B cell (primary cell): ENCODE measurements at regions of chr19 and their contacts with region 1.

Region 1: GRCh38 chr19:18521885-18522624 is at the start of gene ELL:
- DNase-seq: peak; percentile 100
- ATAC-seq: peak; percentile 87
- H3K4me3 ChIP-seq: peak within 1 kb of the TSS; percentile 74 to 97 (median 89)
- H3K4me3 Mint-ChIP-seq: peak within 1 kb of the TSS; percentile 90
- H3K27ac ChIP-seq: peak within 1 kb of the TSS; percentile 95 to 98
- H3K27ac Mint-ChIP-seq: peak within 1 kb of the TSS; percentile 95
- H3K4me1 ChIP-seq: peaks cover 7 to 23% of the 10 kb centered on the region in 2 donors
- H3K4me1 Mint-ChIP-seq: peaks cover 18% of the 10 kb centered on the region
- H3K27me3 ChIP-seq: no peaks in the 10 kb centered on the region
- H3K27me3 Mint-ChIP-seq: no peaks in the 10 kb centered on the region
- CTCF ChIP-seq: no peak
- total RNA-seq, gene ELL: 31.4 and 34.0 TPM in 2 replicates

Region 2: GRCh38 chr19:18469069-18469846 is 52.8 kb before region 1 on chr19:
- CTCF ChIA-PET with region 1: interaction called, 20 read pairs
- POLR2A ChIA-PET with region 1: no interaction called
- intact Hi-C with region 1: no loop called
- DNase-seq: peak; percentile 70
- ATAC-seq: no peak
- H3K4me3 ChIP-seq: no peak overlapping the region
- H3K4me3 Mint-ChIP-seq: no peak overlapping the region
- H3K27ac ChIP-seq: no peak overlapping the region
- H3K27ac Mint-ChIP-seq: no peak overlapping the region
- H3K4me1 ChIP-seq: no peaks in the 10 kb centered on the region
- H3K4me1 Mint-ChIP-seq: peaks cover 10% of the 10 kb centered on the region
- H3K27me3 ChIP-seq: no peaks in the 10 kb centered on the region
- H3K27me3 Mint-ChIP-seq: no peaks in the 10 kb centered on the region
- CTCF ChIP-seq: peak; percentile 71

Region 3: DNA sequence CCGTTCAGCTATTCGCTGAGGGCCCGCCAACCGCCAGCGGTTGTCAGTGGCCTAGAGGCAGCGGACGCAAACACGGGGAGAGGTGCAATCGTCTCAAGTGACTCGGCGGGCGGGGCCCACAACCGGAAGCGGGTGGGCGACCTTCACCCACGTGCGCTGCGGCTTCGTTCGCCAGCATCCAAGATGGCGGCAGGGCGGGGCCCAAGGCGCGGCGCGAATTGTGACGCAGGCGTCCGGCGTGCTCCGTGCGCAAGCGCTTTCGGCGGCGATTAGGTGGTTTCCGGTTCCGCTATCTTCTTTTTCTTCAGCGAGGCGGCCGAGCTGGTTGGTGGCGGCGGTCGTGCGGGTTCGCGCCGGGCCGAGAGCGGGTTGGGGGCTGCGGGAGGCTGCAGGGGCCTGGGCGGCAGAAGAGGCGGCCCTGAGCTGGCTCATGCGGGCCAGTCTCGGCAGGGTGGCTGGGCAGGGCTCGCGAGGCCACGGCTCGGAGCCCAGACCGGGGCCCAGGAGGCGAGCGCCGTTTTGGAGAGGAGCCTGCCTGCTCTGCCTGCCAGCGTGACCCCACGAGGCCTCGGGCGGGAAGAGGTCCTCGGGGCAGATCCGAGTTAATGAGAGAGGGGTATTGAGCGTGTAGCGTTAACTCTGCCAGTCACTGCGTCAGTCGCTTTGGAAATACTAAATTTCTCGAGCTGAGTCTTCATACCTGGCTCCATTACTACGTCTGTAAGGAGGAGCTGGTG is 49.7 kb after region 1 on chr19 and contains the start of gene UBA52:
- CTCF ChIA-PET with region 1: interaction called, 26 read pairs
- POLR2A ChIA-PET with region 1: interaction called, 9 read pairs
- intact Hi-C with region 1: loop called (anchors 1 kb)
- DNase-seq: peak; percentile 99
- ATAC-seq: peak; percentile 93
- H3K4me3 ChIP-seq: peak within 1 kb of the TSS; percentile 69 to 94 (median 86)
- H3K4me3 Mint-ChIP-seq: peak within 1 kb of the TSS; percentile 94
- H3K27ac ChIP-seq: peak within 1 kb of the TSS; percentile 85 to 95
- H3K27ac Mint-ChIP-seq: peak within 1 kb of the TSS; percentile 90
- H3K4me1 ChIP-seq: peaks cover 12 to 25% of the 10 kb centered on the region in 2 donors
- H3K4me1 Mint-ChIP-seq: peaks cover 16% of the 10 kb centered on the region
- H3K27me3 ChIP-seq: no peaks in the 10 kb centered on the region
- H3K27me3 Mint-ChIP-seq: no peaks in the 10 kb centered on the region
- CTCF ChIP-seq: no peak
- total RNA-seq, gene UBA52: 1,690 and 1,837 TPM in 2 replicates

Region 4: DNA sequence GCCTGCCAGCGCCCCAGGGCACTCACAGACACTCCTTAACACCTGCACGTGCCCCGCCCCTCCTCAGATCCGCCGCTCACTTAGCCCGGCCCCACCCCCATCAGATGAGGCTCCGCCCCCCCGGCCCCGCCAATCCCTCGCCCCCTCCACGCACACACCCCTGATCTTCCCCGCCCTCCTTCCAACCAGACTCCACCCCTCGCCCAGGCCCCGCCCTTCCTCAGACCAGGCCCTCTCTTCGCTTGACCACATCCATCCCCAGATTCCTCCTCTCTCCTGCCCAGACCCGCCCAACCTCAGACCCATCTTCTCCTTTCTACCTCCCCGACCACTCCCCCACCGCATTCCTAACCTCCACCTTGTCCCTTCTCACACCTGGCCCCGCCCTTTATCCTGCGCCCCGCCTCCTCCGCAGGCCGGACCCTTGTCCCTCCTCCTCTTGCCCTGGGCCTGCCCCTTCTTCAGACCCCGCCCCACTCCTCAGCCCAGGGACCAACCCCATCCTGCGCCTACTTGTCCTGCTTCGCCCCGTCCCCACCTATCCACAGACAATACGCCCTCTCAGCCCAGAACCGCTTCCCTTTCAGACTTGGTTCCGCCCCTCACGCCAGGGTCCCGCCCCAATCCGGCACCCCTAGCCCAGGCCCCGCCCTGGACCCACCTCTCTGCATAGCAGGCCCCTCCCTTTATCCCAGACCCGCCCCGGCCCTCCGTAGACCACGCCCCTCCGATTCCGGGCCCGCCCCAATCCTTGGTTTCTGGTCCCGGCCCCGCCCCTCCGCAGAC is 114.3 kb after region 1 on chr19:
- CTCF ChIA-PET with region 1: no interaction called
- POLR2A ChIA-PET with region 1: no interaction called
- intact Hi-C with region 1: loop called (anchors 1 kb)
- DNase-seq: peak; percentile 98
- ATAC-seq: peak; percentile 87
- H3K4me3 ChIP-seq: peak overlapping the region in 4 of 5 experiments; percentile 71 to 95 (median 82)
- H3K4me3 Mint-ChIP-seq: peak overlapping the region; percentile 95
- H3K27ac ChIP-seq: peak overlapping the region; percentile 46 to 84
- H3K27ac Mint-ChIP-seq: peak overlapping the region; percentile 95
- H3K4me1 ChIP-seq: peaks cover 12 to 27% of the 10 kb centered on the region in 2 donors
- H3K4me1 Mint-ChIP-seq: peaks cover 25% of the 10 kb centered on the region
- H3K27me3 ChIP-seq: no peaks in the 10 kb centered on the region
- H3K27me3 Mint-ChIP-seq: peaks cover 3% of the 10 kb centered on the region
- CTCF ChIP-seq: no peak

Region 5: DNA sequence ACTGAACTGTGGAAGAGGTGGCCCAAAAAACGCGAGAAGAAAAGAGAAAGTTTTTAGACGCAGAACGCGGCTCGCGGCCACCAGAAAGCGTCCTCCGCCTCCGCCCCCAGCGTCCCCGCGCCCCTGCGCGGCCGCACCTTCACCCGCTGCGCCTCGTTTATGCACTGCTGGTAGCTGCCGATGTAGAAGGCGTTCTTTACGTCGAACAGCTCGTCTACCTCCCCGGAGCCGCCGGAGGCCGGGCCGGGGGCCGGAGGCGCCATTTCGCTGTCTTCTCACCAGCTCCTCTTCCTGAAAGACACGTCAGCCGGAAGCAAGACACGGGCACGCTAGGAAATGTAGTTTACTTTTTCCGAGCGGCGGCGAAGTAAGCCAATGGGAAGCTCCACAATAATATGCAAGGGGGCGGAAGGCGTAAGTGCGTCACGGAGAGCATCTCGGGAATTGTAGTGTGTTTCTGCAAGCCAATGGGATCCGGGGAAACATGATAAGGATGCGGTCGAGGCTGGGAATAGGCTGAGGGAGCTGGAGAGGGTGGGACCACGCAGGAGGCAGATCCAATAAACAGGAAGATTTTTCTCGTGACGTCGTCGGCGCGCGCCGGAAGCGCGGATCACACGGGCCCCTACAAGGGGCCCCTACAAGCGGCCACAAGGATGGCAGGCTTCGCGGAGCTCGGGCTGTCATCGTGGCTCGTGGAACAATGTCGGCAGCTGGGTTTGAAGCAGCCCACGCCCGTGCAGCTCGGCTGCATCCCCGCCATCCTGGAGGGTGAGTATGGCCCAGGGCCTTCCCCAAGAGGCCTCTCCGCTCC is 397.2 kb after region 1 on chr19 and contains the starts of genes COPE and DDX49:
- CTCF ChIA-PET with region 1: interaction called, 3 read pairs
- POLR2A ChIA-PET with region 1: interaction called, 5 read pairs
- intact Hi-C with region 1: loop called (anchors 1 kb)
- DNase-seq: peak; percentile 100
- ATAC-seq: peak; percentile 97
- H3K4me3 ChIP-seq: peak within 1 kb of the TSS; percentile 93 to 100 (median 97)
- H3K4me3 Mint-ChIP-seq: peak within 1 kb of the TSS; percentile 83
- H3K27ac ChIP-seq: peak within 1 kb of the TSS; percentile 84 to 93
- H3K27ac Mint-ChIP-seq: peak within 1 kb of the TSS; percentile 80
- H3K4me1 ChIP-seq: peaks cover 17 to 27% of the 10 kb centered on the region in 2 donors
- H3K4me1 Mint-ChIP-seq: peaks cover 41% of the 10 kb centered on the region
- H3K27me3 ChIP-seq: no peaks in the 10 kb centered on the region
- H3K27me3 Mint-ChIP-seq: no peaks in the 10 kb centered on the region
- CTCF ChIP-seq: no peak
- total RNA-seq, gene COPE: 153 and 154 TPM in 2 replicates
- total RNA-seq, gene DDX49: 38.9 and 39.5 TPM in 2 replicates